Activated T-helper 1 cell treated with anti-CD3 and anti-CD28 coated beads, Interleukin-12 subunit alpha, Interleukin-12 subunit beta, Interleukin-2, Interleukin-4 antibody, amounts not matched to agents 30 ng/mL and 10 ng/mL and 1 ng/mL, durations not matched to agents 14 hours and 24 hours and 36 hours (primary cell): ENCODE measurements at regions of chr11 and their contacts with region 1.

Region 1: DNA sequence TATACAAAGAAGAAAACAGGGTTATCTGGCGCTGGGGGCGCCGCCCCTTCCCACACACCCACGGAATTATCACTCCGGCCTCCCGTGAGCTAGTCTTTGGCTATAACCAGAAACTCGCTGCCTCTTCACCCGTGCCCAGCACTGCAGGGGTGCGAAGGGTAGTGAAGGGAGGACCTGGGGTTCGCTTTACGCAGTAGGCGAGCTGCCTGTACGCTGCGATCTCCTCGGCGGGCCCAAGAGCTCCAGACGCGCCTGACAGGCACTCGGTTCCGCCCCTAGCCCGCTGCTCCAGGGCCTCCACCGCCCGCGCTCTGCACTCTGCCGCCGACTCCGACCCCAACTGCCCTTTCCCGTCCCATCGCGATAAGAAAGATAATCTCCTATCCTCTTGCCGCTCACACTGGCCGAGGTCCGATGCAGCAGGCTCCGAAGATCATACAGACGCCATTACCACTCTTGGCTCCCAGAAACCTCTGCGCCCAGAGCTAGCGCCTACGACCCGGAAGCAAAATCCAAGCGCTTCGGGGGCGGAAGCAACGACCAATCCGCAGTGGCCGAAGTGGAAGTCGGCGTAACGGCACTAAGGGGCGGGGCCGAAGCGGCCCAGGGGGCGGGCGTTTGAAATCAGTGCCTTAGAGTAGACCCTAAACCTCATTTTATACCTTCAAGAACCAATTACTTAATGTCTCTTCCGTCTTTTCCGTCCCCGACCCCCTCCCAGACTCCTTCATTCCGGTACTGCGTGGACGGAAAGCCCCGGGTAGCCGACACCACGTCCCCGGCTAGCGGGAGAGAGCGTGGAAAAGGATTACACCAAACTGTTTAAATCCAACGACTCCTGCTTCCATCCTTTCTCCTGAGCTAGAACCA is at the starts of genes CWC15 and KDM4D:
- DNase-seq: peak; percentile 91
- H3K4me3 Mint-ChIP-seq: peak within 1 kb of the TSS; percentile 96
- H3K27ac Mint-ChIP-seq: peak within 1 kb of the TSS; percentile 96
- H3K4me1 Mint-ChIP-seq: peaks cover 43% of the 10 kb centered on the region
- H3K27me3 Mint-ChIP-seq: no peaks in the 10 kb centered on the region
- total RNA-seq, gene CWC15: 97.7 and 101 TPM in 2 replicates
- total RNA-seq, gene KDM4D: 1.1 TPM in 2 replicates

Region 2: DNA sequence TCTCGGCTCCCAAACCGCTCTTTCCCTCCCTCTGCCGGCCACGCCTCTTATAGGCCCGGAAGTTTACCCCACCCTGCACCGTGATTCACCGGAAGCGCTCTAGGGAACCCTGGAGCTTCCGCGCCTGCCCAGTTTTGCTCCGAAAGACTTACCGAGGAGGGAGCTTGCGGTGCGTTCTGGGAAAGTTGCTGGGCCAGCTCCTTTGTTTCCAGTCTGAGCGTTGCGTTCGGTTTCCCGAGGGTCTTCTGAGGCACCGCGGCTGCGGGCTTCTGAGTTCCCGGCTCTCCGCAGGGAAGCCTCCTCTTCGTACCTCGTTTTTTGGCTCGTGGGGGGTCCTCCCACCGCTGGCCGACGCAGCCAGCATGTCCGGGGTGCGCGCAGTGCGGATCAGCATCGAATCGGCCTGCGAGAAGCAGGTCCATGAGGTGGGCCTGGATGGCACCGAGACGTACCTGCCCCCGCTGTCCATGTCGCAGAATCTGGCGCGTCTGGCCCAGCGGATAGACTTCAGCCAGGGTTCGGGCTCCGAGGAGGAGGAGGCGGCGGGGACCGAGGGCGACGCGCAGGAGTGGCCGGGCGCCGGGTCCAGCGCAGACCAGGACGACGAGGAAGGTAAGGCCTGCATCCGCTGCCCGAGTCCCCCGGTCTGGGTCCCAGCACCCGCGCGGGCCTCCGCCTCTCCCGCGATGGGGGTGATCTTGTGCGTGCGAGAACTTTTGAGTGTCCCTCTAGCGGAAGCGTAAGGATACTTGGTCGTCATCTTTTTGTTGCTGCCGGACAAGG is 1189.0 kb before region 1 on chr11 and contains the start of gene MED17:
- intact Hi-C with region 1: loop called (anchors 5 kb)
- DNase-seq: peak; percentile 87
- H3K4me3 Mint-ChIP-seq: peak within 1 kb of the TSS; percentile 93
- H3K27ac Mint-ChIP-seq: peak within 1 kb of the TSS; percentile 88
- H3K4me1 Mint-ChIP-seq: peaks cover 45% of the 10 kb centered on the region
- H3K27me3 Mint-ChIP-seq: no peaks in the 10 kb centered on the region
- total RNA-seq, gene MED17: 55.8 and 59.4 TPM in 2 replicates

Region 3: GRCh38 chr11:94543695-94544645 is 429.4 kb before region 1 on chr11 and contains the start of gene FUT4:
- intact Hi-C with region 1: loop called (anchors 2 kb)
- DNase-seq: peak; percentile 70
- H3K4me3 Mint-ChIP-seq: peak within 1 kb of the TSS; percentile 98
- H3K27ac Mint-ChIP-seq: peak within 1 kb of the TSS; percentile 99
- H3K4me1 Mint-ChIP-seq: peaks cover 45% of the 10 kb centered on the region
- H3K27me3 Mint-ChIP-seq: peaks cover 5% of the 10 kb centered on the region
- total RNA-seq, gene FUT4: 8.0 and 8.6 TPM in 2 replicates

Region 4: GRCh38 chr11:94876645-94877442 is 96.5 kb before region 1 on chr11:
- intact Hi-C with region 1: loop called (anchors 2 kb)
- DNase-seq: peak; percentile 38
- H3K4me3 Mint-ChIP-seq: peak overlapping the region; percentile 45
- H3K27ac Mint-ChIP-seq: peak overlapping the region; percentile 78
- H3K4me1 Mint-ChIP-seq: peaks cover 32% of the 10 kb centered on the region
- H3K27me3 Mint-ChIP-seq: no peaks in the 10 kb centered on the region

Region 5: GRCh38 chr11:95123556-95123955 is 150.2 kb after region 1 on chr11:
- intact Hi-C with region 1: no loop called
- DNase-seq: no peak
- H3K4me3 Mint-ChIP-seq: no peak overlapping the region
- H3K27ac Mint-ChIP-seq: no peak overlapping the region
- H3K4me1 Mint-ChIP-seq: peaks cover 5% of the 10 kb centered on the region
- H3K27me3 Mint-ChIP-seq: no peaks in the 10 kb centered on the region

Region 6: DNA sequence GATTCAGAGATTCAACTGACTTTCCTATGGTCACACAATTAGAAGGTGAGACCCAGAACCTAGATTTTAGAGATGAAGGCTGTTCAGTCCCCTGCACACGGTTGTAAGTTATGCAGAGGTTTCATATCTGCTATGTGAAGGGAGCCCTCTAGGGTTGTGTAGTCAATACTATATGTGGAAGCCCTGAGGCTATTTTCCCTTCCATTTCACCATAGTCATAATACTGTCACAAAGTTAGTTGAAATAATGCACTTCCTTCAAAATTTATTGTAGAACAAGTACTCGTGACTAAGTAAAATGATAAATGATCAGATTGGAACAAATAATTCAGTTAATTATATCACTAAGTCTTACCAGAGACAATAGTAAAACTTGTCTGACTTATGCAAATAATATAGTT is 165.1 kb after region 1 on chr11:
- intact Hi-C with region 1: loop called (anchors 1 kb)
- DNase-seq: no peak
- H3K4me3 Mint-ChIP-seq: no peak overlapping the region
- H3K27ac Mint-ChIP-seq: no peak overlapping the region
- H3K4me1 Mint-ChIP-seq: peaks cover 15% of the 10 kb centered on the region
- H3K27me3 Mint-ChIP-seq: peaks cover 8% of the 10 kb centered on the region

Region 7: DNA sequence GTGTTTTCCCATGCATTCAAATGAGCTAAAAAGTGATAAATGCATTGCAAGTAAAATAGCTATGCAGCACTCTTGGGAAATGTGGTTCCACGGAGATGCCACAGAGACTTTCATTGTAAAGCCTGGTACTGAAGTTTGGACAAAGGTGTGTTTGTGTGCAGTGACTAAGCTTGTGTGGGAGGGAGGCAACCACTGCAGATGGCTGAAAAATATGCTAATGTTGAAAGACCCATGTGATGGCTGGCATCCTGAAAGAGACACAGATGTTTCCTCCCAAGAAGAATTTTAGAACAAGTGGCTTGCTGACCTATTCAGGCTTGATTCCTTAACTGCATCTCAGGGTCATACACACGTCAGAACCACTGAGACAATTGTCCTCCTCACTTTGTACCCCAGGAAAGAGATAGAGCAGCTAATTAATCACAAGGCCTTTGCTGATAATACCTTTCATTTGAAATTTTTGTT is 742.5 kb after region 1 on chr11:
- intact Hi-C with region 1: loop called (anchors 10 kb)
- DNase-seq: no peak
- H3K4me3 Mint-ChIP-seq: peak overlapping the region; percentile 54
- H3K27ac Mint-ChIP-seq: peak overlapping the region; percentile 82
- H3K4me1 Mint-ChIP-seq: peaks cover 63% of the 10 kb centered on the region
- H3K27me3 Mint-ChIP-seq: no peaks in the 10 kb centered on the region

Region 8: DNA sequence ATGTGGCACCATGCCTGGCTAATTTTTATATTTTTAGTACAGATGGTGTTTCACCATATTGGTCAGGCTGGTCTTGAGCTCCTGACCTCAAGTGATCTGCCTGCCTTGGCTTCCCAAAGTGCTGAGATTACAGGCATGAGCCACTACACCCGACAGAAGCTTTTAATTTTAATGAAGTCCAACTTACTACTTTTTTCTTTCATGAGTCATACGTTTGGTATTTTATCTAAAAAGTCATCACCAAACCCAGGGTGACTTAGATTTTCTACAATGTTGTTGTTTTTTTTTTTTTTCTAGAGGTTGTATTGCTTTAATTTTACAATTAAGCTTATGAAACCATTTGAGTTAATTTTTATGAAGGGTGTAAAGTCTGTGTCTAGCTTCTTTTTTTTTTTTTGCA is 1451.4 kb after region 1 on chr11:
- intact Hi-C with region 1: loop called (anchors 10 kb)
- DNase-seq: no peak
- H3K4me3 Mint-ChIP-seq: no peak overlapping the region
- H3K27ac Mint-ChIP-seq: no peak overlapping the region
- H3K4me1 Mint-ChIP-seq: peaks cover 6% of the 10 kb centered on the region
- H3K27me3 Mint-ChIP-seq: peaks cover 46% of the 10 kb centered on the region